ENCODE measurements at regions of chr1 and their contacts with region 1.

Region 1: GRCh38 chr1:110619412-110620249 is 13.5 kb upstream of the KCNA2 start:
- DNase-seq: peak; percentile 88
- CTCF ChIP-seq: peak; percentile 96

Region 2: DNA sequence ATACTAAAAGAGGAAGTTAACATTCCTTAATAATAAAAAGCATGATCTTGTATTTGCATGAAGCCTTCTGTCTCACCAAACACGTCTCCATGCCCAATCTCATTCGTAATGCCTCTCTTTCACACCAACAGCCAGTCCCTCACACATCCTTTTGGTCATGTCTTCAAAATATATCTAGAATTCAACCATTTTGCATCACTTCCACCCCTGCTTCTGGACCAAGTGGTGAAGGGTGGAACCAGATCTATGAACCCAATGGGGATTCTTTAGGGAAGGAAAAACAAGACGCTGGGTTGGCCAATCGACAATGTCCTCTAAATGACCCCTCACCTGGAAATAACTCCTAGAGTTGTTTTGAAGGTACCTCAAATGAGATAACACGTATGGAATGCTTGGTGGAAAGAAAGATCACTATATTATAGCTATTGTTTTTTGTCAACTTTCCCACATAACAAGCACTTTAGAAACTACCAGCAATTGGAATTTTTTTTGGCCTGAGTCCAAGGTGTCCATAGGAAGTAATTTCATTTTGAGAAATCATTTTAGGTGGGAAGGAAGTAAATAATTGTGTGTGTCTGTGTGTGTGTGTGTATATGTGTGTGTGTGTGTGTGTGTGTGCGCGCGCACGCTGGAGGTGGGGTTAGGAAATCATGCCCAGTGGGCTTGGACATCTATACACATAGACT is 100.4 kb before region 1 on chr1 and contains the start of gene KCNA10:
- CTCF ChIA-PET with region 1: interaction called, 12 read pairs
- POLR2A ChIA-PET with region 1: no interaction called
- DNase-seq: no peak
- CTCF ChIP-seq: no peak

Region 3: DNA sequence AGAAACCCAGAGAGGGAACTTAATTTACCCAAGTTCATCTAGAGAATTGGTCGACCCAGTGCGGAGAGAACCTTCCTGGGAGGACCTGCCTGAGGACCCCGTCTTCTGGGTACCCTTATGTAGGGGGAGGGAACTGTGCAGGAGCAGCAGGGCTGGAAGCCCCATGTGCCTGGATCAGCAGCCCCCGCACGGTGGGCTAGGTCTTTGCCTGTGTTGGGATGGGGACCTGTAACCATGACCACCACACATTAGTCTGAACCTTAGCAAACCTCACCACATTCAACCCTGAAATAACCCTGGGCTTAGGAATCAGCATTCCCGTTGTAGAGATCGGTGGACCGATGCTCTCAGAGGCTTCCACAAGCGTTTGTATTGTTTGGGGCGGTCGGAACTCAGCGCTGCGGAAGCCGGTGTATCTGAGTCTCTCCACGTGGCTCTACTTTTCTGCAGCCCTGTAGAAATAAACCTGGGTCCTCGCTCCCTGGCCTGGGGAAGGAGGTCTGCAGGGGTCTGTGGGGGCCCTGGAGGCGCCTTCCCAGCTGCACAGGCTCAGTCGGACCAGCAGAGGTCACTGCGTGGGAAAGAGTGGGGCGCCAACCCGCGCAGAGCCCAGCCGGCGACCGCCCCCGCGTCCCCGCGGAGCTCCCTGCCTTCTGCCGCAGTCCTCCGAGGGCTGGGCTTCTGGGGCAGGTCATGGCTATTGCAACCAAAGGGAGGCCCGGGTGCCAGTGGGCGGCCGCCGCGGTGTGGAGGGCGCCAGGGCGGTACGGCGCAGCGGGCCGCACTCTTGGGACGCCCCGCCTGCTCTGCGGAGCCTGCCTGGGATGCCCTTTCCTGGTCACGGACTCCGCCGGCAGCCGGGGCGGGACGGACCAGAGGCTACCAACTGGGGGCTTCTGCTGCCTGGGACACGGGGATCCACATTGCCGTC is 64.5 kb before region 1 on chr1:
- CTCF ChIA-PET with region 1: interaction called, 12 read pairs
- POLR2A ChIA-PET with region 1: no interaction called
- DNase-seq: peak; percentile 78
- CTCF ChIP-seq: peak; percentile 63

Region 4: GRCh38 chr1:110630839-110631663 is 11.4 kb after region 1 on chr1:
- CTCF ChIA-PET with region 1: interaction called, 45 read pairs
- POLR2A ChIA-PET with region 1: no interaction called
- DNase-seq: peak; percentile 67
- CTCF ChIP-seq: peak; percentile 75

Region 5: GRCh38 chr1:110645821-110646735 is 26.4 kb after region 1 on chr1:
- CTCF ChIA-PET with region 1: interaction called, 23 read pairs
- POLR2A ChIA-PET with region 1: no interaction called
- DNase-seq: no peak
- CTCF ChIP-seq: no peak

Region 6: GRCh38 chr1:110780600-110781484 is 161.2 kb after region 1 on chr1:
- CTCF ChIA-PET with region 1: interaction called, 179 read pairs
- POLR2A ChIA-PET with region 1: no interaction called
- DNase-seq: peak; percentile 79
- CTCF ChIP-seq: peak; percentile 79

Region 7: DNA sequence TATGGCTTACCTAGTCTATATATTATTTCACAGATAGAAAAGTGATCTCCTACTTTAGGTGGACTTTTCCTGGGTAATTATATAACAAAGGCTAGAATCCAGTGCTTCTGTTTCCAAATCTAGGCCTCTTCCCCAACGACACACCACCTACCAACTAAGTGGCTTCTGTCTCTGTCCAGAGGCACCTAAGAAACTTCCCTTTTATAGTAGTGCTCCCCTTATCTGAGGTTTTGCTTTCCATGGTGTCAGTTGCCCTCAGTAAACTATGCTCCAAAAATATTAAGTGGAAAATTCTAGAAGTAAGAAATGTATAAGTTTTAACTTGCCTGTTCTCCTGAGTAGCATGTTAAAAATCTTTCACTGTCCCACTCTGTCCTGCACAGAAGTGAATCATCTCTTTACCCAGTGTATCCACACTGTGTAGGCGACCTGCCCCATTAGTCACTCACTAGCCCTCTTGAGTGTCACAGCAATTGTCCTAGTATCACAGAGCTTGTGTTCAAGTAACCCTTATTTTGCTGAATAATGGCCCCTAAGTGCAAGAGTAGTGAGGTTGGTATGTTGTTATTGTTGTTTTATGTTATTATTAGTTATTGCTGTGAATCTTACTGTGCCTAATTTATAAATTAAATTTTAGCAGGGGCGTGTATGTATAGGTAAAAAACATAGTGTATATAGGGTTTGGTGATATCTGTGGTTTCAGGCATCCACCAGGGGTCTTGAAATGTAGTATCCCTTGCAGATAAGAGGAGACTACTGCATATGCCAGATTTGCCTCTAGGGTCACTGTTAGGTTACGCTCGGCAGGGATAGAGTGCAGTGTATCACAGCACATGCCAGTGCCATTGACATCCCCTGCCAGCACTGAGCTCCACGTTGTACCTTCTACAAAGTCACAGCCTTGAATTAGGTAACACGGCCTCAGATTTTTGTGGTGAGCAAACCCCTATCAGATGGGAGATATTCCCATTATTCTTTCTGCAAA is 238.6 kb after region 1 on chr1:
- CTCF ChIA-PET with region 1: no interaction called
- POLR2A ChIA-PET with region 1: no interaction called
- DNase-seq: no peak
- CTCF ChIP-seq: no peak

Measured in GM10248 (cell line).